ENCODE measurements at regions of chr13 and their contacts with region 1.

Region 1: GRCh38 chr13:23707674-23708073 is 137.5 kb downstream of the TNFRSF19 start:
- DNase-seq: no peak
- H3K4me3 ChIP-seq: no peak overlapping the region
- H3K27ac ChIP-seq: no peak overlapping the region
- H3K4me1 ChIP-seq: no peaks in the 10 kb centered on the region
- H3K27me3 ChIP-seq: no peaks in the 10 kb centered on the region
- CTCF ChIP-seq: peak; percentile 20 to 49

Region 2: GRCh38 chr13:23018143-23018542 is 689.5 kb before region 1 on chr13:
- CTCF ChIA-PET with region 1: no interaction called
- dilution Hi-C with region 1: no loop called
- in situ Hi-C with region 1: no loop called
- intact Hi-C with region 1: no loop called
- DNase-seq: no peak
- H3K4me3 ChIP-seq: no peak overlapping the region
- H3K27ac ChIP-seq: no peak overlapping the region
- H3K4me1 ChIP-seq: no peaks in the 10 kb centered on the region
- H3K27me3 ChIP-seq: no peaks in the 10 kb centered on the region
- CTCF ChIP-seq: no peak

Region 3: GRCh38 chr13:23510979-23511735 is 196.5 kb before region 1 on chr13:
- CTCF ChIA-PET with region 1: no interaction called
- dilution Hi-C with region 1: no loop called
- in situ Hi-C with region 1: no loop called
- intact Hi-C with region 1: loop called (anchors 2 kb)
- DNase-seq: peak; percentile 46
- H3K4me3 ChIP-seq: no peak overlapping the region
- H3K27ac ChIP-seq: no peak overlapping the region
- H3K4me1 ChIP-seq: peaks cover 20% of the 10 kb centered on the region
- H3K27me3 ChIP-seq: no peaks in the 10 kb centered on the region
- CTCF ChIP-seq: peak; percentile 29 to 37

Region 4: GRCh38 chr13:23718996-23719395 is 11.3 kb after region 1 on chr13:
- CTCF ChIA-PET with region 1: no interaction called
- dilution Hi-C with region 1: no loop called
- in situ Hi-C with region 1: no loop called
- intact Hi-C with region 1: no loop called
- DNase-seq: no peak
- H3K4me3 ChIP-seq: no peak overlapping the region
- H3K27ac ChIP-seq: no peak overlapping the region
- H3K4me1 ChIP-seq: no peaks in the 10 kb centered on the region
- H3K27me3 ChIP-seq: no peaks in the 10 kb centered on the region
- CTCF ChIP-seq: no peak

Measured in mammary epithelial cell (primary cell).